AG04449 (cell line): ENCODE measurements at regions of chr20 and their contacts with region 1.

Region 1: GRCh38 chr20:35303735-35304491 is 11.7 kb upstream of the FAM83C start:
- DNase-seq: no peak
- H3K4me3 ChIP-seq: no peak overlapping the region
- CTCF ChIP-seq: peak; percentile 94

Region 2: DNA sequence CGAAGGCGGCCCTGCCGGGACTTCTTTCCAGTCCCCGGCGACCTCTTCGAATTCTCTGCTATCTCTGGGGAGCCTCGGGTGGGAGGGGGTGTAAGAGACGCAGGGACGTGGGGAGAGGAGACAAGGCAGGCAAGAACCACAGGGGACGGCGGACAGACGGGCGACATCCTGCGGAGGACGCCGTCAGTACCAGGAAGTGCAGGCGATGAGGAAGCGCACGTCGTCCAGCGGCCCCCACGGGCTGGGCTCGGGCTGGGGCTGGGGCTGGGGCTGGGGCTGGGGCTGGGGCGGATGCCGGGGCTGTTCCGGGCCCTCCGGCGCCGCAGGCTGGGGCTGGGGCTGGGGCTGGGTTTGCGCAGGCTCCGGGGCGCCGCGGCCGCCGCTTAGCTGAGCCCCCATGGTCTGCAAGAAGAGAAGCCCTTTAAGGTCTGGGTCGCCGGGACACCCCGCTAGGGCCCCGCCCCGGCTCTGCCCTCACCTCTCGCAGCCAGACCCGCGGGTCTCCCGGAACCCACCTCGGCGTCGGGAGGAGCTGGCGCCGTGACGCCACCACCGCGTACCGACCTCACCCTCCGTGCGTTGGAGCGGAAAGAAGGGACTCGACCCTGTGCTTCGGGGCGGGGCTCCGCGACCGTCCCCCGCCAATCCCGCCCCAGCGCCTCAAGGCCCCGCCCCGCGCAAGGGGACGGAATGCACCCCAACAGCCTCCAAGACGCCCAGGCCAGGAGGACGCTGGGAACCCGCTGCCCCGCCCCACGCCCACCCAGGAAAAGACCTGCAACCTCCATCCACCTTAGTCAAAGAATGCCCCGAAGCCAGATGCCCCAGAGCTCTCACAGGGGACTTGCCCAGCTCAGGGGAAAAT is 26.1 kb before region 1 on chr20 and contains the start of gene MMP24OS:
- CTCF ChIA-PET with region 1: interaction called, 42 read pairs
- POLR2A ChIA-PET with region 1: interaction called, 4 read pairs
- DNase-seq: no peak
- H3K4me3 ChIP-seq: peak within 1 kb of the TSS; percentile 83
- CTCF ChIP-seq: peak; percentile 48

Region 3: DNA sequence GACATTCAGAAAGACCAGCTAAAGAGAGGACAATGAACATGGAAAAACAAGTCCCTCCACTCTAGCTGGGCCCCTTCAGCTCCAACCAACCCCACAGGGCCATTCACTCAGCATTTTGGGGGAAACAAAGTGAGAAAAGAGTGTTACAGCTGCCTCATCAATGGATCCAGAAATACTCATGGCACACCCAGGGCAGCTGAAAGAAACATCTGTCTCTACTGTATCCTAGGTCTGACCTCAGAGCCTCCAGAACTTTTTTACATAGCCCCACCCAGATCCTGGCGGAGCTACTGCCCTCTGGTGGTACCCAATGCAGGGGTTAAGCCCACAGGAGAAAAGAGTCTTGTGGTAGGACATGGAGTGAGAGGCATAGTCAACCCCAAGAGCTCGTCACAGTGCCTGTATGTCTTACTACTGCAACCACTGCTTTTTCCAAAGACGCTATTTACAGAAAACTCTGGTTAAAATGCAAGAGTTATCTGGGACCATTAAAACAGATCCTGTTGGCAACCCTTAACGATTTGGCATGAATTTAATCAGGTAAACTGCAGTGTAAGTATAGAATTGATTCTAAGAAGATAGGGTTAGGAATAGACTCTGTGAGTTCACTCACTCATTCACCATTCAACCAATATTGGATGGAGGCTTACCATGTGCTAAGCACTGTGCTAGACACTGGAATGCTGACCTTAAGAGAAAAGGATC is 25.7 kb after region 1 on chr20:
- CTCF ChIA-PET with region 1: interaction called, 148 read pairs
- POLR2A ChIA-PET with region 1: interaction called, 4 read pairs
- DNase-seq: no peak
- H3K4me3 ChIP-seq: no peak overlapping the region
- CTCF ChIP-seq: peak; percentile 32

Region 4: DNA sequence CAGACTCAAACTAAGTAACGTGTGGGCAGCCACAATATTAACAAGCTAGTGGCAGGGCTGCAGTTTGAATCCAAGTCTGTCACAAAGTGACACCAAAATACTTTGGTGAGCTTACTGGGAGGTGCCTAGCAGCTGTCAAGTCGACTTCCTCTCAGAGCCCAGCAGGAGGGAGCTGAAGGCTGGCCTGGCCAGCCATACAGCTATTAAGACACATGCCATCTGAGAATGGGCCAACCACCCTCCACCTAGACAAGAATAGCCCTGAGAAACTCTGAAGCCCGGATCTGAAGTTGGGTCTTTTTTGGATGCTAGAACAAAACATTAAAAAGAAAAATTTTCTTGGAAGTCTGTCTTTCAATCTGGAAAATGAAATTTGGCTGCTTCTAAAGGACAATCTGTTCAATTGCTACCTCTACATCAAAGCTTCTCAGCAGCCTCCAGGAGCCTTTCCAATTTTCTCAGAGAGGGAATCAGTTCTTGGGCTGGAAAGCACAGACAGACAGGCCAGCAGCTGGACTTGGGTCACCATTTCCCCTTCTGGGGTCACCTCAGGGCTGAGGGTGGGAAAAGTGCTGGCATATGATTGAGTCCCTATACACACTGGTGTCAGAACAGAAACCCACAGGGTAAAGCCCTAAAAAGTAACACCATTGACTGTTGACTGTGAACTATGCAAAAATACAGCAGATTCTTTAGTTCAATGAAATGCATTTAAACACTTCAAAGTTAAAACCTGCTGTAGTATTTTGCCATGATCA is 64.9 kb after region 1 on chr20:
- CTCF ChIA-PET with region 1: interaction called, 14 read pairs
- POLR2A ChIA-PET with region 1: interaction called, 6 read pairs
- DNase-seq: no peak
- H3K4me3 ChIP-seq: no peak overlapping the region
- CTCF ChIP-seq: no peak

Region 5: GRCh38 chr20:35410613-35411012 is 106.7 kb after region 1 on chr20:
- CTCF ChIA-PET with region 1: interaction called, 41 read pairs
- POLR2A ChIA-PET with region 1: no interaction called
- DNase-seq: no peak
- H3K4me3 ChIP-seq: peak overlapping the region; percentile 88
- CTCF ChIP-seq: no peak

Region 6: GRCh38 chr20:35454881-35455609 is 151.1 kb after region 1 on chr20 and contains the start of gene CEP250:
- CTCF ChIA-PET with region 1: interaction called, 662 read pairs
- POLR2A ChIA-PET with region 1: interaction called, 9 read pairs
- DNase-seq: peak; percentile 53
- H3K4me3 ChIP-seq: peak within 1 kb of the TSS; percentile 82
- CTCF ChIP-seq: no peak